Natural killer cell (primary cell): ENCODE measurements at regions of chr10 and their contacts with region 1.

Region 1: DNA sequence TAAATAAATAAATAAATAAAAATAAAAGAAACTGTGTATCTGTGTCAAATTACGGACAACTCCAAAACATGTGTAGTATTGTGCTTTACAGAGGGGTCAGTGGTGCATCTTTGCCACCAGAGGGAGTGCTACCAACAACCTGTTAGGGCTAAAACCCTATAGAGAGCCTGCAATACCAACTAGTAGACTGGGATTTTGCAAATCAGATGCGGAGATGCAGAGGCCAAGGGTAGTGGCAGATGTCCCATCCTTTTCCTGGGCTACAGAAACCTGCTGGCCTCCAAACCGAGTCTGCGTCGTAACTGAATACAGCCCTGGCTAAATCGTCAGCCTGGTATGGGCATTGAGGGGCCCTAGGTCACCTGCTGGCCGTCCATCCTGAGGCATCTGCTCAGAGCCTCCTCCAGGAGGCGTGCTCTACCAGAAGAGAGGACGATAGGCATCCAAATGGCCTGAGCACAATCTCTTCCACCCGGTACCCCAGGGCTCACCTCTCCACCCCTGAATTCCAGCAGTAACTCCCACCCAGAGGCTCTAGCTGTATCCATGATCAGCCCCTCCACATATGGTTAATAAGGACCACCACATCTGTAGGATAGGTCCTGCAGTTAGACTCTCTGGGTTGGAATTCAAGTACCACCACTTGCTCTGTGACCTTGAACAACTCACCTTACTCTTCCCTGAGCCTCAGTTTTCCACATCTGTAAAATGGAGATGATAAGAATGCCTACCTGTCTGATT is 6.2 kb upstream of the RRP12 start:
- DNase-seq: peak; percentile 56 to 87
- ATAC-seq: peak; percentile 94 to 95 (median 95)
- H3K4me3 ChIP-seq: peak overlapping the region; percentile 3
- H3K4me3 Mint-ChIP-seq: peak overlapping the region; percentile 58
- H3K27ac ChIP-seq: peak overlapping the region; percentile 39
- H3K27ac Mint-ChIP-seq: peak overlapping the region; percentile 62 to 82
- H3K4me1 ChIP-seq: peaks cover 23% of the 10 kb centered on the region
- H3K4me1 Mint-ChIP-seq: peaks cover 14 to 20% of the 10 kb centered on the region in 2 donors
- H3K27me3 ChIP-seq: no peaks in the 10 kb centered on the region
- H3K27me3 Mint-ChIP-seq: no peaks in the 10 kb centered on the region
- CTCF ChIP-seq: peak; percentile 86

Region 2: DNA sequence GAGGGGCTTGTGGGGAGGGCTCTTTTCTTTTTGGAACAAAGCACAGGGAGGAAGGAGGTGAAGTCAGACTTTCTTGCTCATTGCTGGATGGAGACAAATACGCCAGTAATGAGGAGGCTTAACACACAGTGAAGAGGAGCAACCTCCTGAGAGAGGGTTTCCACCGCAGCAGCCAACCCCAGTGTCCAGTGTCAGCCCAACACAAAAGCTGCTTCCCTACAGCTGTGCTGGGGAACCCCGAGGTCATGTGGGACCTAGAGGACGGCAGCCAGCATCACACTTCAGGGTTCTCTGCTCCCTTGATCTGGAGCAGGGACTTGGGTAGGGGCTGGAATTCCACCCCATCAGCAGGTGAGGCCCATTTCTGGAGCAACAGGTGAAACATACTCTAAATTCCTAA is 1143.7 kb before region 1 on chr10:
- intact Hi-C with region 1: no loop called
- DNase-seq: no peak
- ATAC-seq: no peak
- H3K4me3 ChIP-seq: no peak overlapping the region
- H3K4me3 Mint-ChIP-seq: no peak overlapping the region
- H3K27ac ChIP-seq: no peak overlapping the region
- H3K27ac Mint-ChIP-seq: no peak overlapping the region
- H3K4me1 ChIP-seq: peaks cover 9% of the 10 kb centered on the region
- H3K4me1 Mint-ChIP-seq: no peaks in the 10 kb centered on the region
- H3K27me3 ChIP-seq: no peaks in the 10 kb centered on the region
- H3K27me3 Mint-ChIP-seq: peaks cover 3 to 7% of the 10 kb centered on the region in 2 donors
- CTCF ChIP-seq: no peak

Region 3: GRCh38 chr10:97376413-97376812 is 31.0 kb before region 1 on chr10:
- intact Hi-C with region 1: no loop called
- DNase-seq: no peak
- ATAC-seq: peak in 1 of 3 donors; percentile 19
- H3K4me3 ChIP-seq: no peak overlapping the region
- H3K4me3 Mint-ChIP-seq: no peak overlapping the region
- H3K27ac ChIP-seq: no peak overlapping the region
- H3K27ac Mint-ChIP-seq: peak overlapping the region in 1 of 2 donors; percentile 14
- H3K4me1 ChIP-seq: no peaks in the 10 kb centered on the region
- H3K4me1 Mint-ChIP-seq: no peaks in the 10 kb centered on the region
- H3K27me3 ChIP-seq: no peaks in the 10 kb centered on the region
- H3K27me3 Mint-ChIP-seq: no peaks in the 10 kb centered on the region
- CTCF ChIP-seq: no peak

Region 4: DNA sequence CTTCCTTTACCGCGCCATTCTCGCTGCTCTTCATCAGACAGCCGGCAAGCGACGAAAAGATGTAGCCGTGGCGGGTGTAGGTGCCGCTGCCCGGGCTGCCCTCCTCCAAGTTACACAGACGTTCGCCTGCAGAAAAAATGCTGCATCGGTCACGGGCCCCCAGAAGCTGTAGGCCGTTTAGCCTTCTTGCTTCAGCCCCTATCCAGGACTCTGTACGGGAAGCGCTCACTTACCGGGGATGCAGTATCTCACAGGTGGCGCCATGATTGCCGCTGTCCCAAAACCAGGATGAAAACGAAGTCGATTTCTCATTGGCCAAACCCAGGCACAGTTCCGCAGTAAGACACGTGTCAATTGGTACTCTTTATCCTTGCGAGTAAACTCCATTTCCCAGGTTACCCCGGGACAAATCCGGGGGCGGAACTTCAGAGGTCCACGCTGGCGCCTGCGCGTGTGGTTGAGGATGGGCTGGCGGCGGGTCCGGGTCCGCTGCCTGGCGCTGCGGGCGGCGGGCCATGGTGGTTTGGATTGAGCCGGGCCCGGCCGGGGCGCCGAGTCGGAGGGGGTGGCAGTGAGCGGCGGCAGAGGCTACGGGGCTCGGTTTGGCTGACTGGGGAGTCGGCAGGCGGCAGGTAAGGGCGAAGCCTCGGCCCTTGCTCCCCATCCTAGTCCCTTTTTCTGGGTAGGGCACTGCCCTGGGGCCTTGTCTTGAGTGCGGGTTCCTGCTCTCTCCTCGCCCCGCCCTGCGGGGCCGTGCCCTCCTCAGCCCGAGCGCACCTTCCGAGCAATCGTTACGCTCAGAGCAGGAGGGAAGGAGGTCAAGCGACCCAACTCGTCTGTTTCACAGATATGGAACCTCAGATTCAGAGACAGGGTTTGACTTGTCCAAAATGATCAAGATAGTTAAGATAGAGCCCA is 38.6 kb after region 1 on chr10 and contains the starts of genes EXOSC1 and ZDHHC16:
- intact Hi-C with region 1: loop called (anchors 1 kb)
- DNase-seq: peak; percentile 80 to 95
- ATAC-seq: peak; percentile 97 to 99 (median 98)
- H3K4me3 ChIP-seq: peak within 1 kb of the TSS; percentile 72
- H3K4me3 Mint-ChIP-seq: peak within 1 kb of the TSS; percentile 99
- H3K27ac ChIP-seq: peak within 1 kb of the TSS; percentile 46
- H3K27ac Mint-ChIP-seq: peak within 1 kb of the TSS; percentile 93 to 95
- H3K4me1 ChIP-seq: peaks cover 19% of the 10 kb centered on the region
- H3K4me1 Mint-ChIP-seq: peaks cover 42 to 44% of the 10 kb centered on the region in 2 donors
- H3K27me3 ChIP-seq: no peaks in the 10 kb centered on the region
- H3K27me3 Mint-ChIP-seq: no peaks in the 10 kb centered on the region
- CTCF ChIP-seq: no peak
- total RNA-seq, gene EXOSC1: 36.9 to 44.4 (median 37.6) TPM
- total RNA-seq, gene ZDHHC16: 11.3 to 18.7 (median 12.7) TPM

Region 5: GRCh38 chr10:97553575-97554031 is 146.2 kb after region 1 on chr10:
- intact Hi-C with region 1: loop called (anchors 1 kb)
- DNase-seq: peak; percentile 42 to 74
- ATAC-seq: peak; percentile 67 to 99 (median 88)
- H3K4me3 ChIP-seq: no peak overlapping the region
- H3K4me3 Mint-ChIP-seq: no peak overlapping the region
- H3K27ac ChIP-seq: no peak overlapping the region
- H3K27ac Mint-ChIP-seq: no peak overlapping the region
- H3K4me1 ChIP-seq: no peaks in the 10 kb centered on the region
- H3K4me1 Mint-ChIP-seq: peaks cover 0 to 4% of the 10 kb centered on the region in 2 donors
- H3K27me3 ChIP-seq: no peaks in the 10 kb centered on the region
- H3K27me3 Mint-ChIP-seq: no peaks in the 10 kb centered on the region
- CTCF ChIP-seq: peak; percentile 68